PC-3 (cell line): ENCODE measurements at regions of chr3 and their contacts with region 1.

Region 1: GRCh38 chr3:78165876-78166275 is 1126.0 kb downstream of the ROBO2 start:
- DNase-seq: peak; percentile 48
- ATAC-seq: peak; percentile 62
- H3K4me3 ChIP-seq: no peak overlapping the region
- H3K27ac ChIP-seq: no peak overlapping the region
- H3K4me1 ChIP-seq: no peaks in the 10 kb centered on the region
- H3K27me3 ChIP-seq: no peaks in the 10 kb centered on the region
- CTCF ChIP-seq: peak; percentile 72

Region 2: DNA sequence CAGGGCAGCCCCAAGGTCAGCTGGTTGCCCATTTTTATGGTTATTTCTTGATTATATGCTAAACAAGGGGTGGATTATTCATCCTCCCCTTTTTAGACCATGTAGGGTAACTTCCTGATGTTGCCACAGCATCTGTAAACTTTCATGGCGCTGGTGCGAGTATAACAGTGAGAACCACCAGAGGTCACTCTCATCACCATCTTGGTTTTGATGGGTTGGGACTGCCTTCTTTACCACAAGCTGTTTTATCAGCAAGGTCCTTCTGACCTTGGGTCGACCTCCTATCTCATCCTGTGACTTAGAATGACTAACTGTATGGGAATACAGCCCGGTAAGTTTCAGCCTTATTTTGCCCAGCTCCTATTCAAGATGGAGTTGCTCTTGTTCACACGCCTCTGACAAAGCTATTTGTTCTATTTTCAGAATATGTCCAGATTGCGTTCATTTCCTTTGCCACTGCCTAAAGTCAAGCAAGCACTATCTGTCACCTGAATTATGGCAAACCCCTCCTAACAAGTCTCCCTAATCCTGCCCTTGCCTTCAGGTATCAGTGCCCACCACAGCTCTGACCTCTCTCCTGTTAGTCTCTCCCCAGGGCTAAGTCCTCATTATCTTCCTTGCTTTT is 817.5 kb before region 1 on chr3:
- CTCF ChIA-PET with region 1: no interaction called
- POLR2A ChIA-PET with region 1: no interaction called
- intact Hi-C with region 1: loop called (anchors 10 kb)
- DNase-seq: peak; percentile 63
- ATAC-seq: peak; percentile 81
- H3K4me3 ChIP-seq: no peak overlapping the region
- H3K27ac ChIP-seq: no peak overlapping the region
- H3K4me1 ChIP-seq: no peaks in the 10 kb centered on the region
- H3K27me3 ChIP-seq: no peaks in the 10 kb centered on the region
- CTCF ChIP-seq: peak; percentile 70

Region 3: GRCh38 chr3:78050276-78051065 is 115.4 kb before region 1 on chr3:
- CTCF ChIA-PET with region 1: no interaction called
- POLR2A ChIA-PET with region 1: no interaction called
- intact Hi-C with region 1: no loop called
- DNase-seq: peak; percentile 12
- ATAC-seq: peak; percentile 58
- H3K4me3 ChIP-seq: no peak overlapping the region
- H3K27ac ChIP-seq: no peak overlapping the region
- H3K4me1 ChIP-seq: no peaks in the 10 kb centered on the region
- H3K27me3 ChIP-seq: no peaks in the 10 kb centered on the region
- CTCF ChIP-seq: no peak